Naive thymus-derived CD4-positive, alpha-beta T cell (primary cell): ENCODE measurements at regions of chr19 and their contacts with region 1.

Region 1: GRCh38 chr19:58572818-58573657 is at the start of gene MZF1:
- DNase-seq: peak; percentile 97 to 100 (median 100)
- ATAC-seq: peak; percentile 81
- H3K4me3 ChIP-seq: peak within 1 kb of the TSS; percentile 71
- H3K4me3 Mint-ChIP-seq: peak within 1 kb of the TSS; percentile 82 to 100 (median 98)
- H3K27ac ChIP-seq: peak within 1 kb of the TSS; percentile 97
- H3K27ac Mint-ChIP-seq: peak within 1 kb of the TSS; percentile 97 to 100 (median 100)
- H3K4me1 ChIP-seq: peaks cover 19 to 20% of the 10 kb centered on the region in 2 donors
- H3K4me1 Mint-ChIP-seq: peaks cover 27 to 50% (median 33%) of the 10 kb centered on the region in 7 donors
- H3K27me3 ChIP-seq: no peaks in the 10 kb centered on the region
- H3K27me3 Mint-ChIP-seq: peaks cover 0 to 4% (median 0%) of the 10 kb centered on the region in 5 donors
- total RNA-seq, gene MZF1: 35.0 to 51.8 (median 44.9) TPM

Region 2: DNA sequence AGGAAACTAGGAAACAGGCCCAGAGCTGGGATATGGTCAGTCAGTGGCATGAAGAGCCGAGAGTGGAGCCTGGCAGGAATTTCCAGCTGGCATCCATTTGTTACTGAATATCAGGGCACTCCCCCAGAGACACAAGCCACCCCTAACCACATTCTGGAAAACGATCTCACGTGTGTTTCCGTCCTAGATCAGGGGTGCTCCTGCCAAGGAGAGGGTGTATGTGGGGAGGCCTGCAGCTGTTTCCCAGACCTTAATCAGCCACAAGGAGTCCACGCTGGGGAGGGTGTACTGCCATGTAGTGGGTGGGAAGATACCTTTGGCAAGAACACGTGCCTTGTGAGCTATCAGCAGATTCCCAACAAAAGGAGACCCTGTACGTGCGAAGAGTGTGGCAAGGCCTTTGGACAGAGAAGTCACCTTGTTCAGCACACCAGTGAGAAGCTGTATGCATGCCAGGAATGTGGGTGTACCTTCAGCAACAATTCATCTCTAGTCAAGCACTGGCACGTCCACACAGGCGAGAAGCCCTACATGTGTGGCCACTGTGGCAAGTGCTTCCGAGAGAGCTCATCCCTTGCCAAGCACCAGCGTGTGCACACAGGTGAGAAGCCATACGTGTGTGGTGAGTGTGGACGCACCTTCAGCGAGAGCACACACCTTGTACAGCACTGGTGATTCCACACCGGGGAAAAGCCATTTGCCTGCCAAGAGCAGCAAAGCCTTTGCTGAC is 254.0 kb before region 1 on chr19:
- CTCF ChIA-PET with region 1: no interaction called
- POLR2A ChIA-PET with region 1: no interaction called
- intact Hi-C with region 1: no loop called
- DNase-seq: no peak
- ATAC-seq: no peak
- H3K4me3 ChIP-seq: no peak overlapping the region
- H3K4me3 Mint-ChIP-seq: no peak overlapping the region
- H3K27ac ChIP-seq: no peak overlapping the region
- H3K27ac Mint-ChIP-seq: no peak overlapping the region
- H3K4me1 ChIP-seq: no peaks in the 10 kb centered on the region
- H3K4me1 Mint-ChIP-seq: no peaks in the 10 kb centered on the region
- H3K27me3 ChIP-seq: no peaks in the 10 kb centered on the region
- H3K27me3 Mint-ChIP-seq: no peaks in the 10 kb centered on the region

Region 3: DNA sequence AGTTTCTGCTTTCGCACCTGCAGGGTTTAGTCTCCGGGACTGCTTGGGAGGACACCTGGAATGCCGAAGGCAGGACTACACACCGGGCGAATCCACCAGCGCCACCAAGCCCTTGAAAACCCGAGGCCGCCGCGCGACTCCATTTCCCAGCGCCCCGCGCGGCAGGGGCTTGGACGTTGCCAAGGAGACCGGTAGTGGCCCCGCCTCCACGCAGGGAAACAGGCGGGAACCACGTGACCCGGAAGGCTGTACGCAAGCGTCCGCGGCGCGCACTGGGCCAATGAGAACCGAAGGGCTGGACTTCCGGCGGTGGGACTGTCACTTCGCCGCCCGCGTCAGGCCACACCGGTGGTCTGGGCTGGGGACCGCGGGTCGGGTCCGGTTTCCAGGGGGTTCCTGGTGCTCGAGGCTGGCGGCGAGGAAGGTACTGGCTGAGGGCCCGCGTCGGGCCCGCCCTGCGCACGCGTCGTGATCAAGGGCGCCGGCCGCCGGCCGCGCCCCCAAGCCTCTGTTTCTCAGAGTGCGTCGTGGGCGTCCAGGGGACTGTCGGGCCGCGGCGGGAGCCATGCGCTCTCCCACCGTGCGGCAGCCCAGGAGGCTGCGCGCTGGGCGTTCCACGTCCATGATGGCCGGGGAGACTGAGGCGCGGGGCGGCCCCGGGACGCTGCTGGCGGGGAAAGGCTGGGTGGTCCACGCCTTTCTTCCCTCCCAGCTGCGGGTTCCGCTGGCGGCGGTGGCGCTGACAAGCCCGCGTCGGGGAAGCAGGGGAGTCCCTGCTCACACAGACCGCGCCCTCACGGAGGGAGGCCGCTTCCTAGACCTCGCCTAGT is 106.1 kb before region 1 on chr19 and contains the start of gene ZNF324:
- CTCF ChIA-PET with region 1: no interaction called
- POLR2A ChIA-PET with region 1: no interaction called
- intact Hi-C with region 1: loop called (anchors 1 kb)
- DNase-seq: peak; percentile 92 to 97 (median 95)
- ATAC-seq: peak; percentile 98
- H3K4me3 ChIP-seq: peak within 1 kb of the TSS; percentile 92
- H3K4me3 Mint-ChIP-seq: peak within 1 kb of the TSS; percentile 80 to 89 (median 86)
- H3K27ac ChIP-seq: peak within 1 kb of the TSS; percentile 99
- H3K27ac Mint-ChIP-seq: peak within 1 kb of the TSS in 8 of 9 donors; percentile 67 to 91 (median 85)
- H3K4me1 ChIP-seq: peaks cover 7 to 11% of the 10 kb centered on the region in 2 donors
- H3K4me1 Mint-ChIP-seq: peaks cover 14 to 27% (median 22%) of the 10 kb centered on the region in 7 donors
- H3K27me3 ChIP-seq: no peaks in the 10 kb centered on the region
- H3K27me3 Mint-ChIP-seq: peaks cover 0 to 3% (median 0%) of the 10 kb centered on the region in 5 donors
- total RNA-seq, gene ZNF324: 14.2 to 28.0 (median 23.4) TPM

Region 4: DNA sequence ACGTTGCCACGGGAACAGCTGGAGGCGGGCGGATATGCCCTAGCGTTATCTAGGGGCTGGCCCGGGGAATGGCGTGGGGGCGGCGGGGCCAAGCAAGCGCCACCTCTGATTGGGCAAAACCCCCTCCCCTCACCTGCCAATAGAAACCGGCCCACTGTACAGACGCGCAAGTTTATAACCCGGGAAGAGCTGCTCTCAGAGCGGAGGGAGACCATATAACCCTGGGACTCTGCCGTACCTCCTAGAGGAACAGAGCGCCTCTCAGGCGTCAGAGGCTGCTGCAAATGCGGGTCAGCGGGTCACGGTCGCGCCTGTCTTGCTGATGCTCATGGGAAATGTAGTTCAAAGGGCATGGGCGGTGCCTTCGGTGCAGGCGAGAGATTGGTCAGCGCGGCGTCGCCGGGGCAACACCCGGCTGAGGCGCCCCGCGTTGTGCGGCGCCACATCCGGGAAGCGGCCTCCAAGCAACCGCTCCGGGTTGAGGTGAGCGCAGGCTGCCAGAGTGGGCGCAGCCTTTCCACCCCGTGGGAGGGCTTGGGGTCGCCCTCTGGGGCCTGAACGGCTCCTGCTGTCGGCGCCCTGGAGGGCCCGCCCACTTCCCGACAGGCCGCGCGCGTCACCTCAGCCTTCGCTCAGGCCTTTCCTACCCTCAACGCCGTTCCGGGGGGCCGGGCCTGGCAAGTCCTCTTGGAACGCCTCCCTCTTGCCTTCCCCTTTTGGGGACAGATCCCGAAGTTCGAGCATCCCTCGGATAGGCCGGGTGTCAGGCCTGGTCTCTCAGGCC is 97.1 kb before region 1 on chr19 and contains the start of gene ZNF446:
- CTCF ChIA-PET with region 1: no interaction called
- POLR2A ChIA-PET with region 1: no interaction called
- intact Hi-C with region 1: loop called (anchors 1 kb)
- DNase-seq: peak; percentile 84 to 97 (median 96)
- ATAC-seq: peak; percentile 92
- H3K4me3 ChIP-seq: peak within 1 kb of the TSS; percentile 77
- H3K4me3 Mint-ChIP-seq: peak within 1 kb of the TSS; percentile 78 to 99 (median 96)
- H3K27ac ChIP-seq: peak within 1 kb of the TSS; percentile 91
- H3K27ac Mint-ChIP-seq: peak within 1 kb of the TSS; percentile 87 to 100 (median 99)
- H3K4me1 ChIP-seq: peaks cover 14 to 16% of the 10 kb centered on the region in 2 donors
- H3K4me1 Mint-ChIP-seq: peaks cover 6 to 29% (median 17%) of the 10 kb centered on the region in 7 donors
- H3K27me3 ChIP-seq: no peaks in the 10 kb centered on the region
- H3K27me3 Mint-ChIP-seq: no peaks in the 10 kb centered on the region
- total RNA-seq, gene ZNF446: 9.5 to 20.0 (median 15.1) TPM

Region 5: GRCh38 chr19:58558623-58559274 is 14.3 kb before region 1 on chr19:
- CTCF ChIA-PET with region 1: interaction called, 3 read pairs
- POLR2A ChIA-PET with region 1: interaction called, 40 read pairs
- intact Hi-C with region 1: loop called (anchors 1 kb)
- DNase-seq: peak; percentile 99 to 100 (median 100)
- ATAC-seq: peak; percentile 79
- H3K4me3 ChIP-seq: peak overlapping the region; percentile 97
- H3K4me3 Mint-ChIP-seq: peak overlapping the region; percentile 87 to 98 (median 96)
- H3K27ac ChIP-seq: peak overlapping the region; percentile 97
- H3K27ac Mint-ChIP-seq: peak overlapping the region; percentile 93 to 99 (median 98)
- H3K4me1 ChIP-seq: peaks cover 51 to 63% of the 10 kb centered on the region in 2 donors
- H3K4me1 Mint-ChIP-seq: peaks cover 18 to 86% (median 77%) of the 10 kb centered on the region in 7 donors
- H3K27me3 ChIP-seq: no peaks in the 10 kb centered on the region
- H3K27me3 Mint-ChIP-seq: peaks cover 0 to 4% (median 0%) of the 10 kb centered on the region in 5 donors